Colonic mucosa (tissue), 4 donors: ENCODE measurements at regions of chr20 and their contacts with region 1.

Region 1: GRCh38 chr20:31951530-31952453 is at the start of gene PDRG1:
- DNase-seq: peak; percentile 95
- H3K4me3 ChIP-seq: peak within 1 kb of the TSS; percentile 97
- H3K27ac ChIP-seq: no peak within 1 kb of the TSS
- H3K4me1 ChIP-seq: peaks cover 9% of the 10 kb centered on the region
- H3K27me3 ChIP-seq: no peaks in the 10 kb centered on the region
- CTCF ChIP-seq: peak; percentile 92
- total RNA-seq, gene PDRG1: 9.9 to 14.6 TPM

Region 2: GRCh38 chr20:31851240-31851955 is 100.4 kb before region 1 on chr20:
- intact Hi-C with region 1: loop called (anchors 2 kb)
- DNase-seq: no peak
- H3K4me3 ChIP-seq: no peak overlapping the region
- H3K27ac ChIP-seq: no peak overlapping the region
- H3K4me1 ChIP-seq: no peaks in the 10 kb centered on the region
- H3K27me3 ChIP-seq: no peaks in the 10 kb centered on the region
- CTCF ChIP-seq: no peak